ENCODE measurements at regions of chr22 and their contacts with region 1.

Region 1: GRCh38 chr22:39490135-39490798 is 11.8 kb upstream of the MIEF1 start:
- DNase-seq: peak; percentile 65
- ATAC-seq: peak; percentile 79
- H3K4me3 ChIP-seq: no peak overlapping the region
- H3K27ac ChIP-seq: no peak overlapping the region
- H3K4me1 ChIP-seq: peaks cover 8% of the 10 kb centered on the region
- H3K27me3 ChIP-seq: no peaks in the 10 kb centered on the region
- CTCF ChIP-seq: no peak
- POLR2A ChIP-seq: no peak
- RAD21 ChIP-seq: no peak

Region 2: GRCh38 chr22:39439170-39439569 is 51.1 kb before region 1 on chr22:
- CTCF ChIA-PET with region 1: interaction called, 3 read pairs
- POLR2A ChIA-PET with region 1: interaction called, 3 read pairs
- dilution Hi-C with region 1: no loop called
- in situ Hi-C with region 1: no loop called
- intact Hi-C with region 1: loop called (anchors 10 kb)
- DNase-seq: peak; percentile 76
- ATAC-seq: peak; percentile 66
- H3K4me3 ChIP-seq: no peak overlapping the region
- H3K27ac ChIP-seq: no peak overlapping the region
- H3K4me1 ChIP-seq: peaks cover 4% of the 10 kb centered on the region
- H3K27me3 ChIP-seq: no peaks in the 10 kb centered on the region
- CTCF ChIP-seq: no peak
- POLR2A ChIP-seq: no peak
- RAD21 ChIP-seq: no peak

Measured in IMR-90 (cell line).